PC-3 (cell line): ENCODE measurements at regions of chr11 and their contacts with region 1.

Region 1: GRCh38 chr11:101759771-101760450 is 154.9 kb upstream of the CEP126 start:
- DNase-seq: peak; percentile 87
- ATAC-seq: peak; percentile 77
- H3K4me3 ChIP-seq: no peak overlapping the region
- H3K27ac ChIP-seq: peak overlapping the region; percentile 33
- H3K4me1 ChIP-seq: peaks cover 32% of the 10 kb centered on the region
- H3K27me3 ChIP-seq: no peaks in the 10 kb centered on the region
- CTCF ChIP-seq: peak; percentile 83

Region 2: DNA sequence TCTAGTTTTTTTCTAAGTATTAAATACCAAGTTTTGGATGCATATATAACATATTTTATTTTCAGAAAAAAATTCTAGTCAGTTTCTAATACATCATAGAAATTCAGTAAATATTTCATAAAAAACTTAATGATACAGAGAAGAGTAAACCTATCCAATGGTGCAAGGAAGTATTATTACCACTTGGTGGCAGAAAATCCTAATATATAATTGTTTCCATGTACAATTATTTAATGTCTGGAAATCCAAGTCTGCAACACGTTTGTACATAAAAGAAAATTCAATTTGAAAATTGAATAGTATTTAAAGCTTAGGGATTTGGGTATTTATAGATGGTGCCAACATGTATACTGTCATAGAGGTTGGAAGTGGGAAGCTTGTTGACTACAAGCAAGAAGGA is 303.1 kb before region 1 on chr11:
- CTCF ChIA-PET with region 1: no interaction called
- POLR2A ChIA-PET with region 1: no interaction called
- intact Hi-C with region 1: loop called (anchors 1 kb)
- DNase-seq: peak; percentile 66
- ATAC-seq: 0 out of 2 replicates have a peak, but pooled peaks have one; percentile 23
- H3K4me3 ChIP-seq: no peak overlapping the region
- H3K27ac ChIP-seq: no peak overlapping the region
- H3K4me1 ChIP-seq: peaks cover 25% of the 10 kb centered on the region
- H3K27me3 ChIP-seq: no peaks in the 10 kb centered on the region
- CTCF ChIP-seq: peak; percentile 81

Region 3: DNA sequence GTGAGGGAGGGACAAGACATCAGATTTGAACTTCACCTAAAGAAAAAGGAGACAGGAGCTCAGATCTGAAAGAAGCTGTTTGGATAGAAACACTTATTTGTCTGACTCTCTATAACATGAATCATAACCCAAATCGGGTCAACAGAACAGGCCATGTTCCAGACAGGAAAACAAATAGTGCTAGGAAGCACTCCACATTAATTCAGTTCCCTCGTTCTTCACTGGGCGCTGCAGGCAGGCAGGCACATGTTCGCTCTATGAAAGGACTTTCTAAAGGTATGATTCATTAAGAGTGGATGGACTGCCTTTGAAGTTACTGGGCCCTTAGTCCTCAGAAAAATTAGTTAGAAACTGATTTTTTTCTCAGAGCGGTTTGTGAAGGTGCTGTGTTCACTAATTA is 38.6 kb before region 1 on chr11:
- CTCF ChIA-PET with region 1: no interaction called
- POLR2A ChIA-PET with region 1: no interaction called
- intact Hi-C with region 1: loop called (anchors 5 kb)
- DNase-seq: peak; percentile 79
- ATAC-seq: peak; percentile 73
- H3K4me3 ChIP-seq: no peak overlapping the region
- H3K27ac ChIP-seq: peak overlapping the region; percentile 35
- H3K4me1 ChIP-seq: peaks cover 44% of the 10 kb centered on the region
- H3K27me3 ChIP-seq: no peaks in the 10 kb centered on the region
- CTCF ChIP-seq: no peak

Region 4: DNA sequence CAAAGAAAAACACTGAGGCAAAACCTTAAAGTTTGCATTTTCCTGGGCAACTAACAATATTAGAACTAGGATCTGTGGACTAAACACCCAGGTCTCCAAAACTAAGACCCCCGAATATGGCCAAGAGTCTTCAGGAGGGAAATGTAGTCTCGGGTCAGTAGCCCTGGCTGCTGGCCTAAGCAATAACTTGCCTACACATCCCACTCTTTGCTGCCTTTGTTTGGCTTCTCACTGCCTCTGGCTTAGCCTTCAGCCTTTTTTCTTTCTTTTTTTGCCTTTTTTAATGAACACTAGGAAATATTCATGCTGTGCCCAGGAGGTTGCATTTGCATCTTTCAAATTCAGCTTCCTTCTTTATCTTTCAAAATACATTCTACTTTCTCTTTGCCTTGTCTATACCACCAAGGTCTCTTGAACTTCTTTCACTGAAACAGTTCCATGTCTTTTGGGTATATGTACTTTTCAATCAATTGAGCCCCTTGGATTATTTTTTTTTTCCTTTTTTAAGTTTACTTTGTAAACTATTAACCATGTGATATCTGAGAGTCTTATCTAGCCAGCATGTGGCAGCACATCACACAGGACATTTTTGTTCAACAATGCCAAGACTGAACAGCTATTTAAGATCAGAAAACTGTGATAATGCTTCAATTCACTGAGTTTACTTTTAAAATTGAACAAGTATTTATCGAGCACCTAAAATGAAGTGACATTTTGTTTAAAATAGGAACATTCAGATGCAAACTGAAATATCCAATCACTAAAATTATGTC is 11.2 kb before region 1 on chr11:
- CTCF ChIA-PET with region 1: interaction called, 10 read pairs
- POLR2A ChIA-PET with region 1: no interaction called
- intact Hi-C with region 1: no loop called
- DNase-seq: no peak
- ATAC-seq: no peak
- H3K4me3 ChIP-seq: no peak overlapping the region
- H3K27ac ChIP-seq: no peak overlapping the region
- H3K4me1 ChIP-seq: no peaks in the 10 kb centered on the region
- H3K27me3 ChIP-seq: no peaks in the 10 kb centered on the region
- CTCF ChIP-seq: 0 out of 2 replicates have a peak, but pooled peaks have one; percentile 20

Region 5: GRCh38 chr11:101797335-101797734 is 37.4 kb after region 1 on chr11:
- CTCF ChIA-PET with region 1: interaction called, 21 read pairs
- POLR2A ChIA-PET with region 1: no interaction called
- intact Hi-C with region 1: loop called (anchors 1 kb)
- DNase-seq: peak; percentile 85
- ATAC-seq: peak; percentile 89
- H3K4me3 ChIP-seq: no peak overlapping the region
- H3K27ac ChIP-seq: peak overlapping the region; percentile 38
- H3K4me1 ChIP-seq: peaks cover 15% of the 10 kb centered on the region
- H3K27me3 ChIP-seq: no peaks in the 10 kb centered on the region
- CTCF ChIP-seq: no peak